Activated B cell treated with CpG ODN at 0.5 μM for 24 hours (primary cell): ENCODE measurements at regions of chr1 and their contacts with region 1.

Region 1: DNA sequence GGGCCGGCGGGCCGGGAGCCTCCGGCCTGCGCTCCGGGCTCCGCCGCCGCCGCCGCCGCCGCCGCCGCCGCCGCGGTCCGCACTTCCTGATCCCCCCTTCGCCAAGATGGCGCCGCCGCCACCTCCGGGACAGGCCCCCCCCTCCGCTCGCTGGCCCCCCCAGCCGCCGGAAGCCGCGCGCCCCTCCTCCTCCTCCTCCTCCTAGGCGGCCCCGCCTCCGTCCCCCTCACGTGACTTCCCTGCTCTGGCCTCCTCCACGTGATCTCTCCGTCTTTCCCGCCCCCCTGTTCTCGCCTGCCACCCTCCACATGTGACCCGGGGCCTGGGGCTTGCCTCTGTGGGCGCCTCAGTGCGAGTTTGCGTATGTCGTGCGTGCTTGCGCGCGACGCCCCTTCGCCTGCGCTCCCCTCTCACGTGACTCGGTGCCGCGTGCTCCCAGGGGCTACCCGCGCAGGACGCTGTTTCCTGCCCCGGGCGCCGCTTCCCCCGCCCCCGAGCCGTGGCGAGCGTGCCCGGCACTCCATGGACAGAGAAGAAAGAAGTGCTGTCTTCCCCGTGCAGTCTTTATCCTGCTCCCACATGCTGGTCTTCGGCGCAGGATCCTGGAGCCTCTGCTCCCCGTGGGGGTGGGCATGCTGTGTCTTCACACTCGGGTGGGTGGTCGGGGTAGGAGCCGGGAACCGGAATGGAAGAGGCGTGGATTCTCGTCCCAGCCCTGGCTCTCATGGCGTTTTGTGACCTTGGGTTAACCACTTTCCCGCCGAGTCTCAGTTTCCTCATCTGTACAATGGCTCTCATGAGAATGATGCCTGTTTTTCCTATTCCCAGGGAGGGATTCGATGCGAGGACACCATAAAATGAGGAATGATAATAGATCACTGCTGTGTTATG is at the start of gene UBE2Q1:
- DNase-seq: peak; percentile 98
- ATAC-seq: peak; percentile 88
- H3K4me3 Mint-ChIP-seq: peak within 1 kb of the TSS; percentile 95
- H3K27ac Mint-ChIP-seq: peak within 1 kb of the TSS; percentile 91
- H3K4me1 Mint-ChIP-seq: peaks cover 35% of the 10 kb centered on the region
- H3K27me3 Mint-ChIP-seq: no peaks in the 10 kb centered on the region
- CTCF ChIP-seq: no peak
- total RNA-seq, gene UBE2Q1: 96.5 and 104 TPM in 2 replicates

Region 2: GRCh38 chr1:154220071-154220969 is 338.5 kb before region 1 on chr1 and contains the start of gene UBAP2L:
- CTCF ChIA-PET with region 1: no interaction called
- POLR2A ChIA-PET with region 1: no interaction called
- intact Hi-C with region 1: loop called (anchors 1 kb)
- DNase-seq: peak; percentile 98
- ATAC-seq: peak; percentile 84
- H3K4me3 Mint-ChIP-seq: peak within 1 kb of the TSS; percentile 99
- H3K27ac Mint-ChIP-seq: peak within 1 kb of the TSS; percentile 100
- H3K4me1 Mint-ChIP-seq: peaks cover 75% of the 10 kb centered on the region
- H3K27me3 Mint-ChIP-seq: no peaks in the 10 kb centered on the region
- CTCF ChIP-seq: no peak
- total RNA-seq, gene UBAP2L: 209 and 234 TPM in 2 replicates

Region 3: GRCh38 chr1:154493276-154493675 is 65.5 kb before region 1 on chr1:
- CTCF ChIA-PET with region 1: no interaction called
- POLR2A ChIA-PET with region 1: interaction called, 5 read pairs
- intact Hi-C with region 1: loop called (anchors 1 kb)
- DNase-seq: no peak
- ATAC-seq: peak; percentile 55
- H3K4me3 Mint-ChIP-seq: peak overlapping the region; percentile 73
- H3K27ac Mint-ChIP-seq: peak overlapping the region; percentile 85
- H3K4me1 Mint-ChIP-seq: peaks cover 65% of the 10 kb centered on the region
- H3K27me3 Mint-ChIP-seq: no peaks in the 10 kb centered on the region
- CTCF ChIP-seq: no peak

Region 4: DNA sequence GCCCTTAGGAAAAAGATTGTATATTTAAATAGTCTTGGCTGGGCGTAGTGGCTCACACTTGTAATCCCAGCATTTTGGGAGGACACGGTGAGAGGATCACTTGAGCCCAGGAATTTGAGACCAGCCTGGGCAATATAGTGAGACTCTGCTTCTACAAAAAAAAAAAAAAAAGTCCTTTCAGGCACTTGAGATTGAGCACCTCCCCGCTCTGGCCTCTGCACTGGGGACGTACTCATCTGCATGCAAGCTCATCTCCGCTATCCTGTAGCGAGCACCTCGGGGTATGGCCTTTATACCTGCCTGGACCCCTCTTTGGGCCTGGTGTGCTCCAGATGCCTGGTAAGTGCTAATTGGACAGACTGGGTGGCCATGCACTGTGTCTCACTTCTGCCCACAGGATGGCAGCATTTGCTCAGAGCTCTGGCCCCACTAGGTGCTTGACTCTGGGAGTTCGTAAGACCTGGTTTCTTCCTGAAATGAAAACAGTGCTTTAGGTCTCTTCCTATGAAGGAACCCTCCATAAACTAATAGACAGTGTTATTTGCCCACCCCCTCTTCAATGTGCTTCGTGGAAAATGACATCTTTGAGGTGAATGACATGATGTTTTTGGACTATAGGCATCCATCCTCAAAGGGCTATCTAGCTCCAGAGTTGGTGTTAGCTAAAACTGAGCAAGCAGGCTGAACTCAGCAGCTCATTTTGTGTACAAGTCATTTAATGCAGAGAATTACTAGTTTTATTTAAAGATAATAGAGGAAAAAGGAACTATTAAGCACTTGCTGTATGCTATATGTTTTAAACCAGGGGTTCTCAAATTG is 110.9 kb after region 1 on chr1:
- CTCF ChIA-PET with region 1: interaction called, 4 read pairs
- POLR2A ChIA-PET with region 1: no interaction called
- intact Hi-C with region 1: loop called (anchors 1 kb)
- DNase-seq: peak; percentile 37
- ATAC-seq: peak; percentile 98
- H3K4me3 Mint-ChIP-seq: no peak overlapping the region
- H3K27ac Mint-ChIP-seq: no peak overlapping the region
- H3K4me1 Mint-ChIP-seq: no peaks in the 10 kb centered on the region
- H3K27me3 Mint-ChIP-seq: no peaks in the 10 kb centered on the region
- CTCF ChIP-seq: no peak

Region 5: GRCh38 chr1:154936555-154937084 is 377.8 kb after region 1 on chr1 and contains the start of gene PMVK:
- CTCF ChIA-PET with region 1: interaction called, 7 read pairs
- POLR2A ChIA-PET with region 1: interaction called, 5 read pairs
- intact Hi-C with region 1: loop called (anchors 1 kb)
- DNase-seq: peak; percentile 90
- ATAC-seq: peak; percentile 90
- H3K4me3 Mint-ChIP-seq: peak within 1 kb of the TSS; percentile 98
- H3K27ac Mint-ChIP-seq: peak within 1 kb of the TSS; percentile 100
- H3K4me1 Mint-ChIP-seq: peaks cover 58% of the 10 kb centered on the region
- H3K27me3 Mint-ChIP-seq: no peaks in the 10 kb centered on the region
- CTCF ChIP-seq: no peak
- total RNA-seq, gene PMVK: 24.6 and 26.3 TPM in 2 replicates

Region 6: DNA sequence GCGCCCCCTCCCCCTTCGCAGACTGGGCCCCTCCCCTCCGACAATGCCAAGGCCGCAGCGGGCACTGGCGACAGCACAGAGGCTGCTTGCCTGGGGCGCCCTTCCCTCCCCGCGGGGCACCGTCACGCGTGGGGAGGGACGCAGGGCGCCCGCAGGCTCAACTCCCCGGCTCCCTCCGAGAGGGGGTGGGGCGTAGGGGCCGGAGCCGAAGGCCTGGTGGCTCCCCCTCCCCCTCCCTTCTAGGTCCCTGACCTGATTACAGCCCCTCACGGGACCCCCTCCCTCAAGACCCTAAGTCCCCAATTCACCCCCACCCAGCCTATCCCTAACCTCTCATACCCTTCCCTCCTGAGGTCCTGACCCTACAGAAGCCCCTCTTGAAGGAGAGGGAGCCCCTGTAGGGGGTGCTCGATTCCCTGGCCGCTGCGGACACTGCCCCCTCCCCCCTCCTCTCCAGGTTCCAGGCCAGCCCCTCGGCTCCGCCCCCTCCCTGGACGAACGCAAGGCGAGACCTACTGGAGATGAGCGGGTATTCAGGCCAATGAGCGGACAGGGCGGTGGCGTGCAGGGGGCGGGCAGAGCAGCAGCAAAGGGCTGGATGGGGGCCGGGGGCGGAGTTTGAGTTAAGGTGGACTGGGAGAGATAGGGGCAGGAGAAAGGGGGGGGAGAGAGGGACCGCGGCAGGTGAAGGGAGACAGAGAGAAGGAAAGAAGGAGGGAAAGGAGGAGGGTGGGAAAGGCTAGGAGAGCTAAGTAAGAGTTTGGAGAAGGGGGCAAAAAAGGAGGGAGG is 443.0 kb after region 1 on chr1:
- CTCF ChIA-PET with region 1: no interaction called
- POLR2A ChIA-PET with region 1: no interaction called
- intact Hi-C with region 1: loop called (anchors 1 kb)
- DNase-seq: peak; percentile 94
- ATAC-seq: peak; percentile 81
- H3K4me3 Mint-ChIP-seq: peak overlapping the region; percentile 94
- H3K27ac Mint-ChIP-seq: peak overlapping the region; percentile 95
- H3K4me1 Mint-ChIP-seq: peaks cover 51% of the 10 kb centered on the region
- H3K27me3 Mint-ChIP-seq: no peaks in the 10 kb centered on the region
- CTCF ChIP-seq: no peak

Region 7: GRCh38 chr1:155084722-155085503 is 526.1 kb after region 1 on chr1:
- CTCF ChIA-PET with region 1: interaction called, 9 read pairs
- POLR2A ChIA-PET with region 1: interaction called, 4 read pairs
- intact Hi-C with region 1: loop called (anchors 1 kb)
- DNase-seq: peak; percentile 95
- ATAC-seq: peak; percentile 77
- H3K4me3 Mint-ChIP-seq: peak overlapping the region; percentile 93
- H3K27ac Mint-ChIP-seq: peak overlapping the region; percentile 93
- H3K4me1 Mint-ChIP-seq: peaks cover 49% of the 10 kb centered on the region
- H3K27me3 Mint-ChIP-seq: peaks cover 25% of the 10 kb centered on the region
- CTCF ChIP-seq: peak; percentile 55